ENCODE measurements at regions of chr1 and their contacts with region 1.

Region 1: DNA sequence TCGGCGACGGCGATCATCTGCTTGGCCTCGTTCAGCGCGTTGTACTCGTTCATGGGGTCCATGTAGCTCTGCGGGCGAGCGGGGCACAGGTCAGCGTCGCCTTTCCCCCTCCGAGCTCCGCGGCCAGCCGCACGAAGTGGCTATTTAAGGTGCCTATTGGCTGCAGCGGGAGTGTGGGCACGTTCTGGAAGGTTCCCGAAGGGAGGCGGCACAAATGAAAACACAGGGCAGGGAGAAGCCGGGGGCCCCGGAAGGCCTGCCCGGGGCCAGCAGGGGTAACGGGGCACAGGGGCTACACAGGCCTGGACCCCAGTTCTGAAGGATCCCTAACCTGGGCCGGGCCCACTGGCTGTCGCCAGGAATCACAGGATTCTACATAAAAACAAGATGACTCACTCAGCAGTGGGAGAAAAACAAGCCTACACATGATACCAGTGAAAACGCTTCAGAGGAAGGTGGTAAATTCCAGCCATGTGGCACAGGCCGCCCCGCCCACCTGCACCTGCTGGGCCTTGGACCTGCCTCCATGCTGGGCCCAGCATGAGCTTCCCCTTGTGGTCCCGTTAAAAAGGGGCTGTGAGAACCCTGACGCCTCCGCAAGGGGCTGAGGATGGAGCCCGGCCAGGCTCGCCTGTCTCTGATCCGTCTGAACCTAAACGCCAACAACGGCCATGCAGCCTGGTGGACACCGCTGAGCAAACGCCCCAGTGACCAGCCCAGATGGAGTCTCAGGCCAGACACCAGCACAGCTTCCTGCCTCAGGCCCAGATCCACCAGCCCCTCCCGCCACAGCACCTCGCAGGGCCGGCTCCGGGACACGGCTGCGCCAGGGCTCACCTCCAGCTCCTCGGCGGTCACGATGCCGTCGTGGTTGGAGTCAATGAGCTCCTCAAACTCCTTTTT is 3.9 kb upstream of the TNFRSF4 start:
- DNase-seq: peak; percentile 72
- H3K4me3 ChIP-seq: no peak overlapping the region
- H3K27ac ChIP-seq: peak overlapping the region; percentile 37
- H3K4me1 ChIP-seq: peaks cover 18% of the 10 kb centered on the region
- H3K27me3 ChIP-seq: no peaks in the 10 kb centered on the region
- CTCF ChIP-seq: no peak

Region 2: GRCh38 chr1:1115786-1116700 is 101.8 kb before region 1 on chr1 and contains the start of gene C1orf159:
- CTCF ChIA-PET with region 1: no interaction called
- POLR2A ChIA-PET with region 1: no interaction called
- intact Hi-C with region 1: no loop called
- DNase-seq: peak; percentile 99
- H3K4me3 ChIP-seq: peak within 1 kb of the TSS; percentile 94
- H3K27ac ChIP-seq: peak within 1 kb of the TSS; percentile 79
- H3K4me1 ChIP-seq: peaks cover 4% of the 10 kb centered on the region
- H3K27me3 ChIP-seq: no peaks in the 10 kb centered on the region
- CTCF ChIP-seq: no peak
- total RNA-seq, gene C1orf159: 26.8 and 28.4 TPM in 2 replicates

Region 3: GRCh38 chr1:1173793-1174415 is 44.0 kb before region 1 on chr1 and contains the start of gene TTLL10:
- CTCF ChIA-PET with region 1: no interaction called
- POLR2A ChIA-PET with region 1: no interaction called
- intact Hi-C with region 1: loop called (anchors 5 kb)
- DNase-seq: no peak
- H3K4me3 ChIP-seq: no peak within 1 kb of the TSS
- H3K27ac ChIP-seq: no peak within 1 kb of the TSS
- H3K4me1 ChIP-seq: peaks cover 30% of the 10 kb centered on the region
- H3K27me3 ChIP-seq: no peaks in the 10 kb centered on the region
- CTCF ChIP-seq: no peak
- total RNA-seq, gene TTLL10: not detected in 2 replicates

Region 4: GRCh38 chr1:1231400-1232223 is 13.7 kb after region 1 on chr1 and contains the start of gene SDF4:
- CTCF ChIA-PET with region 1: no interaction called
- POLR2A ChIA-PET with region 1: no interaction called
- intact Hi-C with region 1: no loop called
- DNase-seq: peak; percentile 99
- H3K4me3 ChIP-seq: peak within 1 kb of the TSS; percentile 97
- H3K27ac ChIP-seq: peak within 1 kb of the TSS; percentile 97
- H3K4me1 ChIP-seq: peaks cover 24% of the 10 kb centered on the region
- H3K27me3 ChIP-seq: no peaks in the 10 kb centered on the region
- CTCF ChIP-seq: no peak
- total RNA-seq, gene SDF4: 121 and 133 TPM in 2 replicates

Region 5: GRCh38 chr1:1281533-1282321 is 63.9 kb after region 1 on chr1:
- CTCF ChIA-PET with region 1: no interaction called
- POLR2A ChIA-PET with region 1: no interaction called
- intact Hi-C with region 1: no loop called
- DNase-seq: no peak
- H3K4me3 ChIP-seq: no peak overlapping the region
- H3K27ac ChIP-seq: no peak overlapping the region
- H3K4me1 ChIP-seq: no peaks in the 10 kb centered on the region
- H3K27me3 ChIP-seq: no peaks in the 10 kb centered on the region
- CTCF ChIP-seq: no peak

Measured in A673 (cell line).